Activated B cell treated with CpG ODN at 0.5 μM for 24 hours (primary cell): ENCODE measurements at regions of chr2 and their contacts with region 1.

Region 1: DNA sequence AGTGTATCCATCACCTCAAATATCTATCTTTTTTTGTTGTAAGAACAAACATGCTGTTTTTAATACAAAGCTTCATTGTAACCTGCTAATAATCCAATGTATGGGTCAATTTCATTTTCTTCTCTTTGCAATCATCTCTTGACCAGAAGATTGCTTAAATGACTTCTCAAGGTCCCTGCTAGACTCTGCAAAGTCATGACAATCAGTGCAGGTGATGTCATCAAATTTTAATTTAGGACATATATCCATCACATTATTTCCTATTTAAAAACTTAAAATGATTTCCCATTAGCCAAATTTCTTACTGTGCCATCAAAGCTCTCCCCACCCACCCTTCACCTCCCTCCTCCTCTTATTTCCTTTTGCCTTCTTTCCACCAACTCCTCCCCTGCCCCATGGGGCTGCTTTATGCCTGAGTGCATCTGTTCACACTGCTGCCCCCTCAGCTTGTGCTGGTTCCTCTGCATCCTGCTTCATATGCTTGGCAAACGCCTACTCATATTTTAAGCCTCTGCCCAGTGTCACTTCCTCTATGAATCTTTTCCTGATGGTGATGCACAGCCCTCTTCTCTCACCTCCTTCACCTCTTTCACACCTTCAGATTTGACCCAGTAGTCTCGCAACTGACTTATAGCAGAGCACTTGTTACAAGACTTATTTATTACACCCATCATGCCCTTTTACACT is 20.3 kb downstream of the PLEK start:
- DNase-seq: no peak
- ATAC-seq: peak; percentile 69
- H3K4me3 Mint-ChIP-seq: peak overlapping the region; percentile 29
- H3K27ac Mint-ChIP-seq: peak overlapping the region; percentile 91
- H3K4me1 Mint-ChIP-seq: peaks cover 97% of the 10 kb centered on the region
- H3K27me3 Mint-ChIP-seq: no peaks in the 10 kb centered on the region
- CTCF ChIP-seq: no peak

Region 2: GRCh38 chr2:68403199-68403644 is 17.9 kb after region 1 on chr2:
- CTCF ChIA-PET with region 1: interaction called, 3 read pairs
- POLR2A ChIA-PET with region 1: interaction called, 30 read pairs
- intact Hi-C with region 1: loop called (anchors 1 kb)
- DNase-seq: peak; percentile 43
- ATAC-seq: peak; percentile 89
- H3K4me3 Mint-ChIP-seq: peak overlapping the region; percentile 63
- H3K27ac Mint-ChIP-seq: peak overlapping the region; percentile 88
- H3K4me1 Mint-ChIP-seq: peaks cover 98% of the 10 kb centered on the region
- H3K27me3 Mint-ChIP-seq: no peaks in the 10 kb centered on the region
- CTCF ChIP-seq: no peak

Region 3: GRCh38 chr2:68411397-68412126 is 26.2 kb after region 1 on chr2:
- CTCF ChIA-PET with region 1: interaction called, 3 read pairs
- POLR2A ChIA-PET with region 1: interaction called, 17 read pairs
- intact Hi-C with region 1: loop called (anchors 1 kb)
- DNase-seq: no peak
- ATAC-seq: peak; percentile 98
- H3K4me3 Mint-ChIP-seq: peak overlapping the region; percentile 78
- H3K27ac Mint-ChIP-seq: peak overlapping the region; percentile 93
- H3K4me1 Mint-ChIP-seq: peaks cover 97% of the 10 kb centered on the region
- H3K27me3 Mint-ChIP-seq: no peaks in the 10 kb centered on the region
- CTCF ChIP-seq: no peak